Activated CD4-positive, alpha-beta T cell treated with anti-CD3 and anti-CD28 coated beads for 36 hours (primary cell): ENCODE measurements at regions of chr12 and their contacts with region 1.

Region 1: DNA sequence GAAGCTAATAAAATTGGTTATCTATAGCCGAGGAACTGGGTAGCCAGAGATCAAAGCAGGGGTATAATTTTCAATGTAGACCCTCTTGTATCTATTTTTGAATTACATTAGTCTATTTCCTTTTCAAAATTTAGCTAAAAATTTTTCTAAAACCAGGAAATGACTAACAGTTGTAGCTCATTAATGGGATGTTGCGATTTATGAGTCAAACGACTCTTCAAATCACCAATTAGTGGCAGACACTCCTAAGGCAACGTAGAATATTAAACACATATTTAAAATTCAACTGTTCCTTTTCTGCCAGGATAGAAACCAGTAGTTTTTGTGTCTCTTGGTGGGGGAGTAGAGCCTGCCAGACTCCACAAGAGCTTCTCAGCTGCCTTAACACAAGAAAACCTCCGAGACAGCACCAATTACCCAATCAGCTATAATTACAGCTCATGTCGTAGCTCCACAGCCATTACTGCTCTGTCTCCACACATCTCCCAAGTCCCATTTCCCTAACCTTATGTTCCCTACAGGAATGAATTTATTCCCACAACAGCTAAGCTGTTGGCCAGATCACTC is 26.9 kb downstream of the GCN1 start:
- DNase-seq: no peak
- ATAC-seq: no peak
- H3K4me3 Mint-ChIP-seq: no peak overlapping the region
- H3K27ac Mint-ChIP-seq: no peak overlapping the region
- H3K4me1 Mint-ChIP-seq: no peaks in the 10 kb centered on the region
- H3K27me3 Mint-ChIP-seq: no peaks in the 10 kb centered on the region

Region 2: GRCh38 chr12:120132863-120133385 is 34.7 kb before region 1 on chr12:
- CTCF ChIA-PET with region 1: interaction called, 3 read pairs
- POLR2A ChIA-PET with region 1: no interaction called
- intact Hi-C with region 1: loop called (anchors 5 kb)
- DNase-seq: no peak
- ATAC-seq: no peak
- H3K4me3 Mint-ChIP-seq: no peak overlapping the region
- H3K27ac Mint-ChIP-seq: peak overlapping the region; percentile 25
- H3K4me1 Mint-ChIP-seq: peaks cover 6% of the 10 kb centered on the region
- H3K27me3 Mint-ChIP-seq: no peaks in the 10 kb centered on the region

Region 3: DNA sequence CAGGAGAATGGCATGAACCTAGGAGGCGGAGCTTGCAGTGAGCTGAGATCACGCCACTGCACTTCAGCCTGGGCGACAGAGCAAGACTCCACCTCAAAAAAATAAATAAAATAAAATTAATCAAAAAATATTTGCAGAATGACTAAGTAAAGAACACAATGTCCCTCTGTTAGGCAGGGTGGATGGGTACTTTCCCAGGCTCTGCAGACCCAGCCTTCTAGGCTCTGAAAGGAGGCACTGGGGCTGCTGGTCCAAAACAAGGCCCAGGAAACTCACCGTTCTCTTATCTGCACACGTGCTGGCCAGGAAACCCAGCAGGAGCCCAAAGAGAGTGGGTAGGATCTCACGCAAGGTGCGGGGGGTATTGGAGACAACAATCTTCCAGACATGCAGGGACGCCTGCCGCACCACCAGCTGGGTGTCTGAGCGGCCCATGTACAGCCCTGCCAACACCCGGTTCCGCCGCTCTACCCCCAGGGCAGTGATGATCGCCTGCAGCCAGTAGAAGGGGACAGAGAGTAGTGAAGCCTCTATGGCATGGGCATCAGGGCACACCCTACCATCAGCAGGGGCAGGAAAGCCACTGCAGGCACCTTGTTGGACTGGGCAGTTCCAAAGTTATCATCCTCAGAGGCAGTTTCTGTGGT is 25.3 kb before region 1 on chr12:
- CTCF ChIA-PET with region 1: no interaction called
- POLR2A ChIA-PET with region 1: no interaction called
- intact Hi-C with region 1: loop called in 1 of 2 experiments (anchors 5 kb)
- DNase-seq: no peak
- ATAC-seq: no peak
- H3K4me3 Mint-ChIP-seq: no peak overlapping the region
- H3K27ac Mint-ChIP-seq: no peak overlapping the region
- H3K4me1 Mint-ChIP-seq: no peaks in the 10 kb centered on the region
- H3K27me3 Mint-ChIP-seq: no peaks in the 10 kb centered on the region